Tibial artery (tissue), 4 donors: ENCODE measurements at regions of chr16 and their contacts with region 1.

Region 1: GRCh38 chr16:10918294-10919002 is 23.8 kb downstream of the DEXI start:
- DNase-seq: peak; percentile 99
- H3K4me3 ChIP-seq: peak overlapping the region in 1 of 2 donors; percentile 5
- H3K27ac ChIP-seq: peak overlapping the region; percentile 52 to 56
- H3K4me1 ChIP-seq: peaks cover 0 to 44% (median 34%) of the 10 kb centered on the region in 4 donors
- H3K27me3 ChIP-seq: no peaks in the 10 kb centered on the region
- CTCF ChIP-seq: peak; percentile 92 to 97

Region 2: GRCh38 chr16:10256784-10257641 is 661.4 kb before region 1 on chr16:
- intact Hi-C with region 1: loop called (anchors 10 kb)
- DNase-seq: no peak
- H3K4me3 ChIP-seq: no peak overlapping the region
- H3K27ac ChIP-seq: no peak overlapping the region
- H3K4me1 ChIP-seq: no peaks in the 10 kb centered on the region
- H3K27me3 ChIP-seq: peaks cover 0 to 25% of the 10 kb centered on the region in 2 donors
- CTCF ChIP-seq: peak; percentile 62 to 73

Region 3: DNA sequence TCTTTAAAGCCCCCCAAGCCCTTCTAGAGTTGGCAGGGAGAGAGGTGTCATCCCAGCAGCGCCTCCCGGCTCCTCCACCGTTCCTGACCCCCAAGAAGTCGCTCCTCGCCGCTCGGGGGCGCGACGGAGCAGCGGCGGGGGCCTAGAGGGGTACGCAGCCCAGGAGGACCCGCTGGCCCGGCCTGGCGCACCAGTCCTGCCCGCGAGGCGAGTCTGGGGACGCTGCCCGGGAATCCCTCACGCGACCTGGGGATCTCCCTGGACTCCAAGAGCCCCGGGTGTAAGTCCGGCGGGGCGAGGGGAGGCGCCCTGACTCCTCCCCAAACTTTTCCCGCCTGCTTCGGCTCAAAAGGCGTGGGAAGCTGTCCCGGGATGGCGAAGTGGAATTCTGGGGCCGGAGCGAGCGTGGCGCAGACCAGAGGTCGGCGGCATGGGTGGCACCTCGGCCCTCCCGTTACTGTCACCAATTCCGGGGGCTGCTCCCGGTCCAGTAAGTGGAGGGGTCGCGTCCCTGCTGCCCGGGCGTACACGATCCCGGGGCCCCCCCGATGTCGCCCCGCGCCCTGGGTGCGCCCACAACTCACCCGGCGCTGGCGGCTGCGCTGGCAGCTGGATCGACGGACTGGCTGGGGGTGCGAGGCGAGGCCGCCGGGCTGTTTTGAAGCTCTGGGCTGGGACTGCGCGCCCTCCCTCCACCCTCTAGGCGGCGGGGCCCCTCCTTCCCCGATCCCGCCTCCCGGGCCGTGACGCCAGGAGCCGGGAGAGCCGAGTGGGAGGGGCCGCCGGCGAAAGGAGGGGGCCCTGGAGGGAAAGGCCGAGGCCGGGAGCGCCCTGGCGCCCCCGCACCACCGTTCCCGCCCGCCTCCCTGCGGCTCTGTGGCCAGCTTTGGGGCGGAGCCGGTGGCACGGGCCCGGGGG is 338.2 kb before region 1 on chr16 and contains the start of gene EMP2:
- intact Hi-C with region 1: loop called (anchors 1 kb)
- DNase-seq: peak; percentile 78 to 94
- H3K4me3 ChIP-seq: peak within 1 kb of the TSS; percentile 94 to 99
- H3K27ac ChIP-seq: peak within 1 kb of the TSS; percentile 97
- H3K4me1 ChIP-seq: peaks cover 0 to 52% (median 32%) of the 10 kb centered on the region in 4 donors
- H3K27me3 ChIP-seq: no peaks in the 10 kb centered on the region
- CTCF ChIP-seq: peak; percentile 52 to 66

Region 4: DNA sequence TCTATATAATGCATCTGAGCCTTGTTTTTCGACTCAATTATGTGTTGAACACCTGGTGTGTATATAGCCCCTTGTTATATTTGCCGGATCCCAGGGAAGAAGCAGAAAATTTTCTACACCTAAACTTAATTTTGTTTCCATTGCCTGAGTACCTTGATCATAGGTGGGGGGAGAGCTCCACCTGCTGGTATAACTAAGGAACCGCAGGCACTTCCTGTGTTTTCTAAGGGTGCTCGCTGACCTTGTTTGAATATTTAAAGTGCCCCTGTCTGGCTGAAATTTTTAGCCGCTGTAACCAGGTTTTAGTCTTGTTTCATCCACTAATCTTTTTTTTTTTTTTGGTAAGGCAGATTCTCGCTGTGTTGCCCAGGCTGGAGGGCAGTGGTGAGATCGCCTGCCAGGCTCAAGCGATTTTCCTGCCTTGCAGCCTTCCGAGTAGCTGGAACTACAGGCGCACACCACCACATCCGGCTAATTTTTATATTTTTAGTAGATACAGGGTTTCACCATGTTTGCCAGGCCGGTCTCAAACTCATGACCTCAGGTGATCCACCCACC is 181.3 kb before region 1 on chr16:
- intact Hi-C with region 1: loop called (anchors 5 kb)
- DNase-seq: peak in 1 of 2 donors; percentile 64
- H3K4me3 ChIP-seq: no peak overlapping the region
- H3K27ac ChIP-seq: peak overlapping the region; percentile 58 to 75
- H3K4me1 ChIP-seq: peaks cover 0 to 31% (median 16%) of the 10 kb centered on the region in 4 donors
- H3K27me3 ChIP-seq: no peaks in the 10 kb centered on the region
- CTCF ChIP-seq: peak; percentile 90 to 97

Region 5: DNA sequence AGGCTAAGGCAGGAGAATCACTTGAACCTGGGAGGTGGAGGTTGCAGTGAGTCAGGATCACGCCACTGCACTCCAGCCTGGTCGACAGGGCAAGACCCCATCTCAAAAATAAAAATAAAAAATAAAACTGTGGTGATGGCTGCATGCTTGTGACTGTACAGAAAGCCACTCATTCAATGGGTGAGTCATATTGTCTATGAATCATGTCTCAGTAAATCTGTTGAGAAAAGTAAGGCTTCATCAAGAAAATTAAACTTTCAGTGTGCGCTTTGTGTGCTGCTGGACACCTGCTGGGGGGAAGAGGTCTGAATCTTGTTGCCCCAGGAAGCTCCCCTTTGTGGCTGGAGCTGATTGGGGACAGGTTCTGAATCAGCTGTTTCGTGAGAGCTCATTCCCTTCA is 163.5 kb before region 1 on chr16:
- intact Hi-C with region 1: loop called (anchors 5 kb)
- DNase-seq: no peak
- H3K4me3 ChIP-seq: no peak overlapping the region
- H3K27ac ChIP-seq: peak overlapping the region; percentile 72 to 76
- H3K4me1 ChIP-seq: peaks cover 0 to 27% (median 4%) of the 10 kb centered on the region in 4 donors
- H3K27me3 ChIP-seq: no peaks in the 10 kb centered on the region
- CTCF ChIP-seq: no peak

Region 6: GRCh38 chr16:10828851-10829731 is 89.4 kb before region 1 on chr16:
- intact Hi-C with region 1: no loop called
- DNase-seq: peak; percentile 91 to 98
- H3K4me3 ChIP-seq: peak overlapping the region; percentile 14 to 15
- H3K27ac ChIP-seq: peak overlapping the region; percentile 93
- H3K4me1 ChIP-seq: peaks cover 0 to 36% (median 30%) of the 10 kb centered on the region in 4 donors
- H3K27me3 ChIP-seq: no peaks in the 10 kb centered on the region
- CTCF ChIP-seq: no peak

Region 7: GRCh38 chr16:11240636-11241473 is 322.4 kb after region 1 on chr16:
- intact Hi-C with region 1: no loop called
- DNase-seq: no peak
- H3K4me3 ChIP-seq: no peak overlapping the region
- H3K27ac ChIP-seq: peak overlapping the region in 1 of 2 donors; percentile 17
- H3K4me1 ChIP-seq: no peaks in the 10 kb centered on the region
- H3K27me3 ChIP-seq: no peaks in the 10 kb centered on the region
- CTCF ChIP-seq: no peak